HepG2 (cell line): ENCODE measurements at regions of chr1 and their contacts with region 1.

Region 1: DNA sequence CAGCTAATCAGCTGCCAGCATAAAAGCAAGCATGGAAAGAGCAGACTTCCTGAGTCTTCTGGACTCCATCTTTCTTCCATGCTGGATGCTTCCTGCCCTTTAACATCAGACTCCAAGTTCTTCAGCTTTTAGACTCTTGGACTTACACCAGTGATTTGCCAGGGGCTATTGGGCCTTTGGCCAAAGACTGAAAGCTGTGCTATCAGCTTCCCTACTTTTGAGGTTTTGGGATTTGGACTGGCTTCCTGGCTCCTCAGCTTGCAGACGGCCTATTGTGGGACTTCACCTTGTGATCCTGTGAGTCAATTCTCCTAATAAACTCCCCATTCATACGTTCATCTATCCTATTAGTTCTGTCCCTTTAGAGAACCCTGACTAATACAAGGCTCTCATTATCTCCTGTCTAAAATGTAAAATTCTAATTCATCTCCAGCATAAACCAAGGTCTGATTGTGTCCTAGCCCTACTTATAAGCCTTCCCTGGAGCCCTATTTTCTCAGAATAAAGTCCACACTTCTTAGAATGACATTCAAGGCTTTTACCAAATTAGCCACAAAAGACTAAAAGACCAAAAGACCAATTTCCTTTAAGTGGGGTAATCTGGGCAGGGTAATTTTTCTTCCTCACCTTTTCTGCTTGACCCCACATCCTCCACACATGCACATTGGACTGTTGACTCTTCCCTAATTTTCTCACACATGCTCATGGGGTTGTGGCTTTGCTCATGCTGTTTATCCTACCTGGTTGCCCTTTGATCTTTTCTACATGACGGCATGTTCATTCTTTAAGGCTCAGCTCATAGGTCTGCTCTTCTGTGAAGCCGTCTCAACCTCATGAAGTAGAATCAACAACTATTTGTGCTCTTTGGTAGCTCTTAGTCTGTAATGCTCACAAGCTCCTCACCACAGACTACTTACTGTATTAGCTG is 18.1 kb upstream of the ENAH start:
- DNase-seq: peak; percentile 97
- ATAC-seq: peak; percentile 96
- H3K4me3 ChIP-seq: peak overlapping the region in 1 of 3 experiments; percentile 30; a peak in 1 of 6 replicates
- H3K27ac ChIP-seq: peak overlapping the region; percentile 63
- H3K4me1 ChIP-seq: peaks cover 27% of the 10 kb centered on the region
- H3K27me3 ChIP-seq: no peaks in the 10 kb centered on the region
- CTCF ChIP-seq: no peak
- EP300 ChIP-seq: peak; percentile 27 to 86; a peak in 3 of 4 replicates
- POLR2A ChIP-seq: peak in 1 of 2 experiments; percentile 35; a peak in 1 of 4 replicates
- RAD21 ChIP-seq: no peak

Region 2: DNA sequence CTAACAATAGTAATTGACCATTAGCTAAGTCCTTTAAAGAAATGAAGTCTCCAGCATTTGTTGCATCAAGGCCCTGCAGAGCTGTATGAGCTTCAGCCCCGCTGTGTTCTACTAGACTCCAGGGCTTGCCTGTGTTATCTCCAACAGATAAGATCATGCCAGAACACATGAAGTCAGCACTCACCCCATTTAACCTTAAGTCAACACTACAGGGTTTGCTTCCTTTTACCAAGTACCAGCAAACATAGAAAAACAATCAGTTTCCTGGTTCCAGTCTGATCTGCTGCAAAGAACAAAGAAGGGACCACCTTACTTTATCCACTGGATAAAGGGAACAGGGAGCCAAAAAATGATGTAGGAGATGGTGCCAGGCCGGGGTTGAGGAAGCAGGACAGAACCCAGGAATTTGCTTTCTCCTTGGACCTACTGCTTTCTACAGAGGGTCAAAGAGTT is 23.1 kb after region 1 on chr1:
- CTCF ChIA-PET with region 1: no interaction called
- POLR2A ChIA-PET with region 1: interaction called, 36 read pairs
- in situ Hi-C with region 1: no loop called
- intact Hi-C with region 1: no loop called
- DNase-seq: peak; percentile 98
- ATAC-seq: peak; percentile 98
- H3K4me3 ChIP-seq: no peak overlapping the region
- H3K27ac ChIP-seq: peak overlapping the region; percentile 63
- H3K4me1 ChIP-seq: peaks cover 78% of the 10 kb centered on the region
- H3K27me3 ChIP-seq: no peaks in the 10 kb centered on the region
- CTCF ChIP-seq: no peak
- EP300 ChIP-seq: peak; percentile 46 to 89; a peak in 3 of 4 replicates
- POLR2A ChIP-seq: no peak
- RAD21 ChIP-seq: no peak